Gastrocnemius medialis (tissue), 4 donors: ENCODE measurements at regions of chrX and their contacts with region 1.

Region 1: GRCh38 chrX:133660281-133660680 is 245.0 kb upstream of the GPC4 start:
- DNase-seq: peak in 1 of 2 donors; percentile 16
- ATAC-seq: peak; percentile 56 to 90
- H3K4me3 ChIP-seq: no peak overlapping the region
- H3K27ac ChIP-seq: peak overlapping the region in 1 of 4 donors; percentile 19
- H3K4me1 ChIP-seq: no peaks in the 10 kb centered on the region
- H3K27me3 ChIP-seq: no peaks in the 10 kb centered on the region
- CTCF ChIP-seq: no peak
- POLR2A ChIP-seq: no peak

Region 2: GRCh38 chrX:132968296-132968949 is 691.9 kb before region 1 on chrX:
- in situ Hi-C with region 1: loop called in 1 of 4 experiments (anchors 10 kb)
- intact Hi-C with region 1: no loop called
- DNase-seq: no peak
- ATAC-seq: peak; percentile 39 to 63
- H3K4me3 ChIP-seq: no peak overlapping the region
- H3K27ac ChIP-seq: no peak overlapping the region
- H3K4me1 ChIP-seq: peaks cover 0 to 8% of the 10 kb centered on the region in 2 donors
- H3K27me3 ChIP-seq: no peaks in the 10 kb centered on the region
- CTCF ChIP-seq: no peak
- POLR2A ChIP-seq: no peak